Ascending aorta (tissue), 2 donors: ENCODE measurements at regions of chr12 and their contacts with region 1.

Region 1: DNA sequence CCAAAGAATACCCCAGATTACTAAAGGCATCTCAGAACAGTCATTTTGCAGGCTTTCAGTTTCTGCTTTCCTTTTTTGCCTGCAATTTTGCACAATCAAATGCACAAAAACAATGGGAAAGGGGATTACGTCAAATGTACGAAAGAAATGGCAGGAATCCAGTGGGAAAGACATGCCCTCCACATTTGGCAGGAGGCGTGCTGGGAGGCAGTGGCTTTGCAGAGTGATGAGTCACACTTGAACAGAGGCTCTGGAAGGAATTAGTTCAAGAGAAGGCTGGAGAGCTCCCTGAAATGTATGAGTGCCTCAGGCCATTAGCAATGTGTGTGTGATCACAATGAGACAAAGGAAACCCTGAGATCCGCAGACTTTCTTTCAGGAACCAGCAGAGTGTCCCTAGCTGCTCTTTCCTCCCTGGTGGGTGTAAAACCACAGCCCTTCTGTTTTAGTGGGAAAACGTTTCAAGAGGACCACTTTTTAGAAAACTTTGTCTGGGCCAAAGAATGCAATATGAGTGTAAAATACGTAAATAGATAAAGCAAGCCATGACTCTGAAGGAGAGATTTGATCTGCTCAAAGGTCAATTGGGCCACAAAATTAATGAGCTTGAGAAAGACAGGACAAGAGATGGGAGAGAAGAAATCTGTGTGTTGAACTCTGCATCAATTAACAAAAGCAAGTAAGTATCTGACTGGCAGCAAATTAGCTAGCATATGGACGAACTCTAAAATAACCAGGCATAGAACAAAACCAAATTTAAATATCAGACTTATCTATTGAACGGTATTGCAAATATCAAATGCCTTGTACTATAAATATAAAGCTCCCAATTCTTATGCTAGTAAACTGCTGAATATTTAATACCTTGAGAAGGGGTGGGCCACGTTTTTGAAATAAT is 155.4 kb upstream of the PDE3A start:
- DNase-seq: peak; percentile 75 to 93
- H3K4me3 ChIP-seq: peak overlapping the region; percentile 32 to 35
- H3K27ac ChIP-seq: peak overlapping the region; percentile 72
- H3K4me1 ChIP-seq: peaks cover 0 to 20% of the 10 kb centered on the region in 2 donors
- H3K27me3 ChIP-seq: no peaks in the 10 kb centered on the region
- CTCF ChIP-seq: no peak

Region 2: GRCh38 chr12:19744734-19745218 is 468.1 kb before region 1 on chr12:
- intact Hi-C with region 1: loop called (anchors 10 kb)
- DNase-seq: no peak
- H3K4me3 ChIP-seq: no peak overlapping the region
- H3K27ac ChIP-seq: no peak overlapping the region
- H3K4me1 ChIP-seq: peaks cover 3 to 14% of the 10 kb centered on the region in 2 donors
- H3K27me3 ChIP-seq: no peaks in the 10 kb centered on the region
- CTCF ChIP-seq: no peak

Region 3: GRCh38 chr12:20268121-20268732 is 55.3 kb after region 1 on chr12:
- intact Hi-C with region 1: no loop called
- DNase-seq: no peak
- H3K4me3 ChIP-seq: no peak overlapping the region
- H3K27ac ChIP-seq: no peak overlapping the region
- H3K4me1 ChIP-seq: peaks cover 0 to 17% of the 10 kb centered on the region in 2 donors
- H3K27me3 ChIP-seq: no peaks in the 10 kb centered on the region
- CTCF ChIP-seq: no peak